Ascending aorta (tissue), 2 donors: ENCODE measurements at regions of chr5 and their contacts with region 1.

Region 1: DNA sequence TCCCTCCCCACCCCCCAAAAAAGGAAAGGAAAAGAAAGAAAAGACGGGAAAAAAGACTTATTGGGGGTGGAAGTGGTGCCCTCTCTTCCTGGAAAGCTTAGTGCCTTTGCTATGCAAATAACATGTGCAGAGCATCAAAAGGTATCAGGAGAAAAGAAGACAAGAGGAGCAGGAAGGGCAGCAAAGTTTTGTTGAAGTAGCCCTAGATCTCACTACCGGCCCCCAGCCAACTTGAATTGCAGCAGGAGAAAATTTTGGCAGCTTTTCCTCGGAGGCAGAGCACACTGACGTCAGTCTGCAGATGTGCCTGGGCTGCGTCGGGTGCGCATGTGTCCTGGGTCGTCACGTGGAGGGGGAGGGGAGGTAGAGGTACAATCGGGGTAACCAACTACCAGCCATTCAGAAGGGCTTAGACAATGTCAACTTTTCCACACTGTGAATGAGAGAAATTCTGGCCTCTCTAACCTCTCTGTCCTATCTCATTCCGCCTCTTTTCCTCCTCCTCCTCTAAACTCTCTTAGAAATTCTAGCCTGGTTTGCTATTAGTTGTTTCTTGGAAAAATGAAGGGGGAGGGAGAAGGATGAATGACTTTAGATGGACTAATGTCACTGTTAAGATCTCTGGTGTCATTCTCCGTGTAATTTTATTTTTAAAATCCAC is at the start of gene ADAMTS6:
- DNase-seq: peak; percentile 74 to 97
- H3K4me3 ChIP-seq: peak within 1 kb of the TSS; percentile 61 to 69
- H3K27ac ChIP-seq: peak within 1 kb of the TSS; percentile 92
- H3K4me1 ChIP-seq: peaks cover 0 to 3% of the 10 kb centered on the region in 2 donors
- H3K27me3 ChIP-seq: no peaks in the 10 kb centered on the region
- CTCF ChIP-seq: no peak
- total RNA-seq, gene ADAMTS6: 8.9 TPM

Region 2: DNA sequence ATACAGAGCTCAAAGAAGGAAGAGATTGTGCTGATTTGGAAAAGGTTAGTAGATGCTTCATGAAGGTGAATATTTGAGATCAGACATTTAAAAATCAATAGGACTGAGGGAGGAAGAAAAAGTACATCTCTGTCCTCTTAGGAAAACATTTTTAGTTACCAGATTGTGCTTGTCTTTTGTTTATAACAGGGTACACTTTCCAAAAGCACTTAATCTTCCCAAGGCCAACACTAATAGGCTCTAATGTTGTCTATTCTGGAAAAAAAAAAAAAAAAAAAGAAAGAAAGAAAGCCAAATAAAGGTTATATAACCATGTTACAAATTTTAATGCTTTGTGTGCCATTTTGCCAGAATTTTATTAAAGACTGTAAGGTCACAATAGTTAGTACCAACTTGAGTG is 836.9 kb before region 1 on chr5:
- intact Hi-C with region 1: loop called (anchors 5 kb)
- DNase-seq: no peak
- H3K4me3 ChIP-seq: no peak overlapping the region
- H3K27ac ChIP-seq: no peak overlapping the region
- H3K4me1 ChIP-seq: no peaks in the 10 kb centered on the region
- H3K27me3 ChIP-seq: no peaks in the 10 kb centered on the region
- CTCF ChIP-seq: no peak

Region 3: GRCh38 chr5:64958757-64959391 is 522.9 kb before region 1 on chr5:
- intact Hi-C with region 1: loop called (anchors 1 kb)
- DNase-seq: no peak
- H3K4me3 ChIP-seq: no peak overlapping the region
- H3K27ac ChIP-seq: no peak overlapping the region
- H3K4me1 ChIP-seq: no peaks in the 10 kb centered on the region
- H3K27me3 ChIP-seq: no peaks in the 10 kb centered on the region
- CTCF ChIP-seq: peak in 2 of 3 experiments; percentile 65 to 66

Region 4: DNA sequence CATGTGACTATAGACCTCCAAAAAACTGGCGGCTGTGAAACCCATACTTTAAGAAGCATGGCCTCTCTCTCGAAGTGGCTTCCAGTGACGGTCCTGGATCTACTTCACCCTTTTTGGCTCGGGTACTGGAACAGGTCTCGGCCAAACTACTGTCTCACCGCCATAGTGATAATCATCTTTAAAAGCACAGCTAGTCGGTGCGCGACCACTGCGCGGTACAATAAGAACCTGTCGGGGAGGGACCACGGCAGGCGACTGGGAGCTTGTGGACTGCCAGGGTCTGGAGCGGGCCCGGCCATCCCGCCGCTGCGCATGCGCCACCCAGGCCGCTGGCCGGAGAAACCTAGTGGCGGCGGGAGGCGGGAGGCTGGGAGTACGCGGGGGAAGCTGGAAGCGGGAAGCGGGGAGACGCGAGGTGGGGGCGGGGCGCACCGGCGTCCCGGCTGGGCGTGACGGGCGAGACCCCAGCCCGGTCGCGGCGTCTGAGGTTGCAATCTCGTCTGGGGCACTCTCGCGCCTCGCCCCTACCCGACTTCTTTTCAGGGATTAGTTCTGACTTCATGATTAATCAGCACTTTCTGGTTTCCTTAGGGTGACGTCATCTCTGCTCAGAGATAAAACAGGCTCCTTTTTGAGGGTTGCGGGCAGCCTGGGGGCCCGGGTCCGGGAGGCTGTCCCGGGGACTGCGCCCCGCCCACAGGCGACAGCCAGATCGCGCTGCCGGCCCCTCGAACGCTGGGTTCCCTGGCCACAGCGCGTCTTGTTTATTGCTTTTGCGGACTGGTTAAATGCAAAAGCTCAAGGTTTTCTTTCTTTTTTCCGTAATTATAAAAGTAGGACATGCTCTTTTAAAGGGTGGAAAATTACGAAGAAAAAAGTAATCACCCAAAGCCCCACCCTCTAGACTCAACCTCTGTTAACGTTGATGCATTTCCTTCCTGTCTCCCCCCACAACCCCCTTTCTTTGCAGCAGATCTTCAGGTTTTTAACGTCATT is 446.3 kb before region 1 on chr5:
- intact Hi-C with region 1: loop called (anchors 2 kb)
- DNase-seq: peak; percentile 50 to 93
- H3K4me3 ChIP-seq: peak overlapping the region; percentile 53 to 61
- H3K27ac ChIP-seq: peak overlapping the region; percentile 95 to 97
- H3K4me1 ChIP-seq: peaks cover 7 to 48% of the 10 kb centered on the region in 2 donors
- H3K27me3 ChIP-seq: no peaks in the 10 kb centered on the region
- CTCF ChIP-seq: no peak

Region 5: DNA sequence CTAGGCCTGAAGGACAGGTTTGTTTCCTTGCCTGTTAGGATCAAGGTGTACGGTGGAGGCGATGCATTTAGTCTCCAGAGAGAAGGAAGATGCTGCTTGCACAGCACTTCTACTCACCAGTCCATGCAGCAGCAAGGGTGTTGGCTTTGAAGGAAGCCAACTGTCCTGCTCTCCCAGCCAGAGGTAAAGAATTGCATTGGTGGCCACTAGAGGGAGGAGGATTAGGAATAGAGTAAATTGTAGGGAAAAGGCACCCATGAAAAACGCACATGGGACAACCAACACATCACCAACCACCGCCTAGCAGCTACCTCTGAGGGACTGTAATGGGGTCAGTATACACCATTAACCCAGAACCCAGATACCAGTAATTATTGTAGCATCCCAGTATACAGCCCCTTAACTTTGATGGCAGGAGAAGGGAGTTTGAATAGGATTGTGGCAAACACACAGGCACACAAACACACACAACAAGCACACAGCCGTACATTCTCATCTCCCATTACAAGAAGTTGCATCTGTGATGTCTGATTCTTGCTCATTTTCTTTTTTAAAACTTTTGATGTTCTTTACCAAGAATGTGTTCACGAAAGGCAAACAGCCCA is 267.7 kb before region 1 on chr5:
- intact Hi-C with region 1: loop called (anchors 5 kb)
- DNase-seq: no peak
- H3K4me3 ChIP-seq: no peak overlapping the region
- H3K27ac ChIP-seq: no peak overlapping the region
- H3K4me1 ChIP-seq: no peaks in the 10 kb centered on the region
- H3K27me3 ChIP-seq: no peaks in the 10 kb centered on the region
- CTCF ChIP-seq: peak; percentile 7 to 34 (median 11)

Region 6: GRCh38 chr5:65364907-65365306 is 116.9 kb before region 1 on chr5:
- intact Hi-C with region 1: loop called (anchors 5 kb)
- DNase-seq: no peak
- H3K4me3 ChIP-seq: peak overlapping the region in 1 of 2 donors; percentile 37
- H3K27ac ChIP-seq: peak overlapping the region; percentile 51 to 57
- H3K4me1 ChIP-seq: peaks cover 2 to 13% of the 10 kb centered on the region in 2 donors
- H3K27me3 ChIP-seq: no peaks in the 10 kb centered on the region
- CTCF ChIP-seq: no peak

Region 7: GRCh38 chr5:65562731-65563701 is 81.3 kb after region 1 on chr5 and contains the starts of genes CENPK and PPWD1:
- intact Hi-C with region 1: loop called (anchors 5 kb)
- DNase-seq: peak; percentile 90 to 96
- H3K4me3 ChIP-seq: peak within 1 kb of the TSS; percentile 75 to 92
- H3K27ac ChIP-seq: peak within 1 kb of the TSS; percentile 75 to 86
- H3K4me1 ChIP-seq: peaks cover 0 to 12% of the 10 kb centered on the region in 2 donors
- H3K27me3 ChIP-seq: no peaks in the 10 kb centered on the region
- CTCF ChIP-seq: no peak
- total RNA-seq, gene CENPK: 5.2 TPM
- total RNA-seq, gene PPWD1: 28.6 TPM